MCF 10A (cell line): ENCODE measurements at regions of chr4 and their contacts with region 1.

Region 1: GRCh38 chr4:122798101-122798500 is 28.5 kb upstream of the FGF2 start:
- DNase-seq: peak; percentile 90
- H3K4me3 Mint-ChIP-seq: peak overlapping the region; percentile 66
- H3K27ac Mint-ChIP-seq: peak overlapping the region; percentile 98
- H3K4me1 Mint-ChIP-seq: peaks cover 20% of the 10 kb centered on the region
- H3K27me3 Mint-ChIP-seq: no peaks in the 10 kb centered on the region
- CTCF ChIP-seq: no peak

Region 2: DNA sequence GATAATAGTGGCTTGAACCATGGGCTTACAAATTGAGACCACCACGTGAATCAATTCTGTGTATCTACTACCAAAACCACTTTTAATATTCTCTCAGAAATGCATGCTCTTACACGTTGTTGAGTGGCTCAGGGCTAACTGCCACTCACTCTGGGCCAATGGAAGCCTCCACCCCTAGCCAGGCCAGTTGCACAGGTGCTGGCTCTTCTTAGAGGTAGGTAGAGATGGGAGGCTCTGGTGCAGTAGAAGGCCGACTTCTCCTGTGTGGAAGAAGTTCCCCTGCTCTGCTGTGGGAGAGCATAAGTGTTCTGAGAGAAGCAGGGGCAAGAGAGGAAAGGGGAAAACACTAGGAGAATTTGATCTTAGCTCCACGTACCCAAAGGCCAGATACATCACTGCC is 90.6 kb before region 1 on chr4:
- CTCF ChIA-PET with region 1: no interaction called
- POLR2A ChIA-PET with region 1: no interaction called
- intact Hi-C with region 1: no loop called
- DNase-seq: no peak
- H3K4me3 Mint-ChIP-seq: no peak overlapping the region
- H3K27ac Mint-ChIP-seq: no peak overlapping the region
- H3K4me1 Mint-ChIP-seq: peaks cover 12% of the 10 kb centered on the region
- H3K27me3 Mint-ChIP-seq: no peaks in the 10 kb centered on the region
- CTCF ChIP-seq: no peak

Region 3: GRCh38 chr4:122764821-122765215 is 33.3 kb before region 1 on chr4:
- CTCF ChIA-PET with region 1: interaction called, 17 read pairs
- POLR2A ChIA-PET with region 1: interaction called, 19 read pairs
- intact Hi-C with region 1: no loop called
- DNase-seq: peak; percentile 76
- H3K4me3 Mint-ChIP-seq: peak overlapping the region; percentile 51
- H3K27ac Mint-ChIP-seq: peak overlapping the region; percentile 92
- H3K4me1 Mint-ChIP-seq: peaks cover 17% of the 10 kb centered on the region
- H3K27me3 Mint-ChIP-seq: no peaks in the 10 kb centered on the region
- CTCF ChIP-seq: no peak

Region 4: GRCh38 chr4:122772311-122772710 is 25.8 kb before region 1 on chr4:
- CTCF ChIA-PET with region 1: interaction called, 3 read pairs
- POLR2A ChIA-PET with region 1: interaction called, 36 read pairs
- intact Hi-C with region 1: no loop called
- DNase-seq: peak; percentile 76
- H3K4me3 Mint-ChIP-seq: no peak overlapping the region
- H3K27ac Mint-ChIP-seq: peak overlapping the region; percentile 61
- H3K4me1 Mint-ChIP-seq: peaks cover 29% of the 10 kb centered on the region
- H3K27me3 Mint-ChIP-seq: no peaks in the 10 kb centered on the region
- CTCF ChIP-seq: no peak

Region 5: GRCh38 chr4:122777846-122778655 is 20.1 kb before region 1 on chr4:
- CTCF ChIA-PET with region 1: interaction called, 7 read pairs
- POLR2A ChIA-PET with region 1: interaction called, 39 read pairs
- intact Hi-C with region 1: no loop called
- DNase-seq: peak; percentile 74
- H3K4me3 Mint-ChIP-seq: peak overlapping the region; percentile 35
- H3K27ac Mint-ChIP-seq: peak overlapping the region; percentile 86
- H3K4me1 Mint-ChIP-seq: peaks cover 34% of the 10 kb centered on the region
- H3K27me3 Mint-ChIP-seq: no peaks in the 10 kb centered on the region
- CTCF ChIP-seq: no peak

Region 6: DNA sequence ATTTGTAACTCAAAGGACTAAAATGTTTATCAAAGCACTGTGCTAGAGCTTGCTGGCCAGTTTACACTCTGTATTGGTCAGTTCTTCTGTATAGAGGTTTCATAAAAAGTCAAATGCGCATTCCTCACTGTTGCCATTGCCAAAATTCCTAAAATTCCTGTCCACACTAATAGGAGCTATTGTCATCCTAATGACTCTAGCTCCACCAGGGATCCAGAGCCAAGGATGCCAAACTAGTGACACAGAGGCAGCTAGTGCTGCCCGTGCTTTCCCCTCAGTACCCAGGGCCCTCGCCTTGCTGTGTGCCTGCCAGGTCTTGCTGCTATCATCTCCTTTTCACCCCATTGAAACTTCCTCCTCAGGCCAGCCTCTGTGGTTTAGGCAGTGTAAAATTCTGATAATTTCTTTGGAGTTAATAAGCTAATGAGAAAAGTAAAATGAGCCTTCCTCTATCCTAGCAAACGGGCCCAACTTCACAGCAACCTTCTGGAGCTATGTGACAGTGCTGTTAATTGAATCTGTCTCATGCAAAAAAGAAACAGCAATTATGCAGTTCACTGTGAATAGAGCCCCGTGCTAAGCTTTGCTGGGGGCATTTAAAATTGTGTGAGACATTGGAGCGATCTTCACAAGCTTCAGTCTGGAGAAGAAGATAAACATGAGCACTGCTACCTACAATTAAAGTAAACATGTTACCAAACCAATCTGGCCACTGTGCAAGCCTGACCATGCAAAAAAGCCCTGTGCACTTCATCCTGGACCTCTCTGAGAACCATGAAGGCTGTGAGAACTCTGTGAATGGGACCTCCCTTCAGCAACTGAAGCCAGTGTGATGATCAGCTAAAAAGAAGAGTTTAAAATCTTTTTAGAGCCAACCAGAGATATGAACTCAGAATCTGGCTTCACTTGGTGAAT is 14.5 kb before region 1 on chr4:
- CTCF ChIA-PET with region 1: interaction called, 7 read pairs
- POLR2A ChIA-PET with region 1: interaction called, 39 read pairs
- intact Hi-C with region 1: no loop called
- DNase-seq: peak; percentile 77
- H3K4me3 Mint-ChIP-seq: peak overlapping the region; percentile 3
- H3K27ac Mint-ChIP-seq: peak overlapping the region; percentile 57
- H3K4me1 Mint-ChIP-seq: peaks cover 31% of the 10 kb centered on the region
- H3K27me3 Mint-ChIP-seq: no peaks in the 10 kb centered on the region
- CTCF ChIP-seq: no peak